ENCODE measurements at regions of chr16 and their contacts with region 1.

Region 1: GRCh38 chr16:53503270-53503923 is 388 bp upstream of the AKTIP start:
- DNase-seq: peak; percentile 97
- ATAC-seq: peak; percentile 91
- H3K4me3 Mint-ChIP-seq: peak overlapping the region; percentile 88
- H3K27ac Mint-ChIP-seq: peak overlapping the region; percentile 93
- H3K4me1 Mint-ChIP-seq: peaks cover 42% of the 10 kb centered on the region
- H3K27me3 Mint-ChIP-seq: no peaks in the 10 kb centered on the region

Region 2: DNA sequence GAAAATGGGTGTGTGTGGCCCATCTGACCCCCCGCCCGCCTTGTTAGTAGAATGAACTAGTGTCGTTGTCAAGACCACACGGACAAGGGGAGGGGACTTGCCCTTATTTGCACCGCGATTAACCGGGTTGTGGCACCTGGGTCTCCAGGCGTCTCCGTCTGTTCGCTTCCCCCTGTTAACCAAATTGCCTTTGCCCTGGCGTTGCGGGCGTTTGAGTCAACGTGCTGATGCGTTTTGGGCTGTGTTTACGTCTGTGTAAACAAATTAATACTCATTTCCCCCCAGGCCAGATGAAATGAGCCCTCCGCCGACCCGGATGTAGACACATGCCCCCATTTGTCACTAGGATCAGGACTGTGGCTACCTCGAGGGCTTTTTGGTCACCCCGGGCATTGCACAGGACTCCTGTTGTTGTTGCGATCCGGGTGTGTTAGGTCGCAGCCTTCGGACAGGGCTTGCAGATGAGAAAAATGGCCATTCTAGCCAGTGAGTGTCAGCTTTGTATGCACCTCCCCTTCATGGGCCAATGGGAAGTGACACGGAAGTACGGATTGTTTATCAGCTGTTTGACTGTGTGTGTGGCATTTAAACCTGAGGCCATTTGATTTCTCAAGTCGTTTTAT is 68.2 kb before region 1 on chr16:
- POLR2A ChIA-PET with region 1: interaction called, 66 read pairs
- DNase-seq: peak; percentile 73
- ATAC-seq: peak; percentile 61
- H3K4me3 Mint-ChIP-seq: peak overlapping the region; percentile 92
- H3K27ac Mint-ChIP-seq: peak overlapping the region; percentile 94
- H3K4me1 Mint-ChIP-seq: peaks cover 27% of the 10 kb centered on the region
- H3K27me3 Mint-ChIP-seq: no peaks in the 10 kb centered on the region

Region 3: GRCh38 chr16:53449632-53450517 is 53.5 kb before region 1 on chr16:
- POLR2A ChIA-PET with region 1: interaction called, 39 read pairs
- DNase-seq: no peak
- ATAC-seq: no peak
- H3K4me3 Mint-ChIP-seq: peak overlapping the region; percentile 75
- H3K27ac Mint-ChIP-seq: peak overlapping the region; percentile 73
- H3K4me1 Mint-ChIP-seq: peaks cover 48% of the 10 kb centered on the region
- H3K27me3 Mint-ChIP-seq: no peaks in the 10 kb centered on the region

Region 4: DNA sequence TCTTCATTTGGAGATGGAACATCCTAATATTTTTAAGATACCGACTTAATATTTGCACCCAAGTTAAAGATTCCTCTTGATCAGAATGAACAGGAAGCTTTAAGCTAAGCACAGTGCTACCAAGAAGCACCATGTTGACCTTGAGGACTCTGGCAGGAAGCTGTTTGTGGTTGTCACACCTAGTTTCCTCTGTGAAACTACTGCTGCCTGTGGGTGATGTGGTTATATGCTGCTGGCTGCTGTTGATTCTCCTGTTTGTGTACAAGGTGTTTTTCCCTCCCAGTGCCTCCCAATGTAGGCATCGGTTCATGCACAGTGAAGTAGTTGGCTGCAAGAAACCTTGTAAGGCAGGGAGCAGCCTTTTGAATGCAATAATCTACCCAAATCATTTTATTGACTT is 45.7 kb before region 1 on chr16:
- POLR2A ChIA-PET with region 1: interaction called, 39 read pairs
- DNase-seq: peak; percentile 44
- ATAC-seq: peak; percentile 77
- H3K4me3 Mint-ChIP-seq: peak overlapping the region; percentile 84
- H3K27ac Mint-ChIP-seq: peak overlapping the region; percentile 86
- H3K4me1 Mint-ChIP-seq: peaks cover 72% of the 10 kb centered on the region
- H3K27me3 Mint-ChIP-seq: no peaks in the 10 kb centered on the region

Region 5: DNA sequence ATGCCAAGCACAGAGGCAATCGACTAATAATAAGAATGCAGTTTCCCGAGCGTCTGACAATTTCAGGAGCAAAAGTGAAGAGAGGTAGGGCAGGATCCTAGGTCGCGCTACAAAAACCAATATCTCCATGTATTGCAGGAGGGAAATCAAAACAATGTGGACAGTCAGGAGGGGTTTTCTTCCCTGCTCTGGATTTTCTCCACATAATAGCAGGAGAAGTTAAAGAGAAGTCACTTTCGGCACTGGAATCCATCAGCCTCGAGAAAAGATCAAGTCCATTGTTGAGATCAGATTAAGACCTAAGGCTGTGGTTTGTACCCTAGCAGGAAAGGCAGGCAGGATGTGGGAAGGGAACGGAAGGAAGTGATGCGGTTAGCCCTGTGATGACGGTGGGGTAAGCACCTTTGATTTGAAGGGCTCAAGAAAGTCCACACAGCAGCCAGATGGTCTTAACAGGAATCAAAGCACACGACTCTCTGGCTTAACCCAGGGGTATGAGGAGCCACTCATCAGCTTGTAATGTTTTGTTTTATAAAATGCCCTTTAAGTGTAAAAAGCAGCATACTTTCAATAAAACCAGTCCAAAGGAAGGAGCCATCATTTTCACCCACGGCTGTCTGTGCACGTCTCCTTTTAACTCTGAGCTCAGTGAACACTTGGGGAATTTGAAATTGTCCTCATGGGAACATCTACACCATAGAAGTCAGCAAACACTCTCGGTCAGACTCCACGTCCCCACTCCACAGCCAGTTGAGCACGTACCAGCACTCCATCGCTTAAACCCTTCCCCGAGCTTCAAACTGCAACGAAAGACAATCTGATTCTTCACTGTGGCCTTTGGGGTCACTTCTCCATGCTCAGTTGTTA is 15.4 kb after region 1 on chr16:
- POLR2A ChIA-PET with region 1: interaction called, 39 read pairs
- DNase-seq: peak; percentile 81
- ATAC-seq: peak; percentile 86
- H3K4me3 Mint-ChIP-seq: peak overlapping the region; percentile 79
- H3K27ac Mint-ChIP-seq: peak overlapping the region; percentile 91
- H3K4me1 Mint-ChIP-seq: peaks cover 43% of the 10 kb centered on the region
- H3K27me3 Mint-ChIP-seq: peaks cover 4% of the 10 kb centered on the region

Measured in activated naive CD8-positive, alpha-beta T cell treated with anti-CD3 and anti-CD28 coated beads, Interleukin-2, amount 10 ng/mL, durations not matched to agents 7 days and 5 days (primary cell).